ENCODE measurements at regions of chr3 and their contacts with region 1.

Region 1: DNA sequence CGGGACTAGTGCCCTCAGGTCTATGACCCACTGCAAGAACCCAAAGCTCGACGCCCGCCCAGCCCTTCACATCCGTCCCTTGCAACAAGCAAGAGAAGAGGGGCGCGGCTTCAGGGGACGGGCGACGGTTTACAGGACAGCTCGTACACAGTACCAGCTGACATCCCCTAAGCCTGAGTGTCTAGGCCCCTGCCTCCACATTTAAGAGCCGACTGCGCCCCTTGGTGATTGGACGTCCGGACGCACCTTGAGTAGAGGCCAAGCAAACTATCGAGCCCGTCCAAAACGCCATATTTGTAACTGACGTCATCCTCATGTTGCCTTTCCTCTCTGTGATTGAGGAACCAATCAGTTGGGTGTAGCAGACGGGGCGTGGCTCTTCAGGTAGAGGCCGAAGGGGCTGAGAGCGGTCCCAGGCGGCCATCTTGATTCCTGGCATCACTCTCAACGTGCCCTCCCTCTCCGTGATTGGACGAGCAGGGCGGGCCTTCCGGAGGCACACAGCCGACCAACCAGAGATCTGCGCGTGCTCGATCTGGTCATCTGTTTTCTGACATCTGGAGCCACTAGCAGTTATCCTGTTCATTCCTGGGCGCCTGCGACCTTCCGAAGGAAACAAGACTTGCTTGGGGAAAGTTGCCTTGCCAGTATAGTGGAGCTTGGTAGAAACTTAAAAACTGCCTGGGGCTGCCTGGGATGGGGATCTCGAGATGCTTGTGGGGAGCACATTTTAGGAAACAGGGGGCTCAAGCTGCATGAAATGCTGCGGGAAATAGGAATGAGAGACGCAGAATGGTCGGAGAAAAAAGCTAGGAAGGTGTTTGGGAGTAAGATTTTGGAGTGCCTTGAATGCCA is 4.0 kb upstream of the RPL14 start:
- DNase-seq: peak; percentile 99
- ATAC-seq: peak; percentile 88
- H3K4me3 ChIP-seq: peak overlapping the region; percentile 77
- H3K27ac ChIP-seq: peak overlapping the region; percentile 52
- H3K4me1 ChIP-seq: peaks cover 43% of the 10 kb centered on the region
- H3K27me3 ChIP-seq: no peaks in the 10 kb centered on the region
- CTCF ChIP-seq: no peak; the same call in 1 of the 2 replicates

Region 2: GRCh38 chr3:40309418-40309924 is 143.6 kb before region 1 on chr3 and contains the start of gene EIF1B:
- CTCF ChIA-PET with region 1: no interaction called
- POLR2A ChIA-PET with region 1: no interaction called
- intact Hi-C with region 1: loop called (anchors 2 kb)
- DNase-seq: peak; percentile 98
- ATAC-seq: peak; percentile 92
- H3K4me3 ChIP-seq: peak within 1 kb of the TSS; percentile 93
- H3K27ac ChIP-seq: peak within 1 kb of the TSS; percentile 25; the same call in 1 of the 2 replicates
- H3K4me1 ChIP-seq: peaks cover 14% of the 10 kb centered on the region; the same call in 1 of the 2 replicates
- H3K27me3 ChIP-seq: no peaks in the 10 kb centered on the region
- CTCF ChIP-seq: peak; percentile 87
- total RNA-seq, gene EIF1B: 9.0 and 10.0 TPM in 2 replicates

Region 3: DNA sequence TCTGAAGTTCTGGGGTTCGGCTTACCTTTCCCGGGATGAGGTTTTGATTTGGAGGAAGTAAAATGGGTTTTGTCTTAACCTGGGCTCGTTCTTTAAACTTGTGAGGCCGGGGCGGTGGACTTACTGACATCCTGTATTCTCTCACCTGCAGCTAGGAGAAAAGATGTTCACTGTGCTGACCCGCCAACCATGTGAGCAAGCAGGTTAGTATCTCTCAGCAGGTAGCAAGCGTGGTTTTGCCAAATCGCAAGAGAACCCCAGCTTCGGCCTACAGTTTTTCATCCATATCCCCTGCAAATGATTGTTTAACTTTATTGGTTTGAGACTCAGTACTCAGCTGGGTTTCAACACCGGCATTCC is 65.2 kb before region 1 on chr3:
- CTCF ChIA-PET with region 1: no interaction called
- POLR2A ChIA-PET with region 1: interaction called, 6 read pairs
- intact Hi-C with region 1: loop called (anchors 1 kb)
- DNase-seq: no peak
- ATAC-seq: peak; percentile 11
- H3K4me3 ChIP-seq: peak overlapping the region; percentile 75
- H3K27ac ChIP-seq: peak overlapping the region; percentile 80
- H3K4me1 ChIP-seq: peaks cover 31% of the 10 kb centered on the region
- H3K27me3 ChIP-seq: no peaks in the 10 kb centered on the region
- CTCF ChIP-seq: no peak

Region 4: GRCh38 chr3:40476478-40477470 is 23.7 kb after region 1 on chr3 and contains the start of gene ZNF619:
- CTCF ChIA-PET with region 1: no interaction called
- POLR2A ChIA-PET with region 1: no interaction called
- intact Hi-C with region 1: loop called (anchors 2 kb)
- DNase-seq: peak; percentile 75
- ATAC-seq: peak; percentile 90
- H3K4me3 ChIP-seq: peak within 1 kb of the TSS; percentile 82
- H3K27ac ChIP-seq: no peak within 1 kb of the TSS; the same call in 1 of the 2 replicates
- H3K4me1 ChIP-seq: peaks cover 5% of the 10 kb centered on the region; the same call in 1 of the 2 replicates
- H3K27me3 ChIP-seq: no peaks in the 10 kb centered on the region
- CTCF ChIP-seq: no peak
- total RNA-seq, gene ZNF619: 3.5 and 6.0 TPM in 2 replicates

Region 5: GRCh38 chr3:40505599-40506462 is 52.7 kb after region 1 on chr3 and contains the start of gene ZNF620:
- CTCF ChIA-PET with region 1: interaction called, 3 read pairs
- POLR2A ChIA-PET with region 1: no interaction called
- intact Hi-C with region 1: loop called (anchors 2 kb)
- DNase-seq: peak; percentile 69
- ATAC-seq: peak; percentile 62
- H3K4me3 ChIP-seq: peak within 1 kb of the TSS; percentile 72
- H3K27ac ChIP-seq: peak within 1 kb of the TSS; percentile 63
- H3K4me1 ChIP-seq: peaks cover 24% of the 10 kb centered on the region
- H3K27me3 ChIP-seq: no peaks in the 10 kb centered on the region
- CTCF ChIP-seq: peak; percentile 55
- total RNA-seq, gene ZNF620: 1.8 and 2.5 TPM in 2 replicates

Region 6: DNA sequence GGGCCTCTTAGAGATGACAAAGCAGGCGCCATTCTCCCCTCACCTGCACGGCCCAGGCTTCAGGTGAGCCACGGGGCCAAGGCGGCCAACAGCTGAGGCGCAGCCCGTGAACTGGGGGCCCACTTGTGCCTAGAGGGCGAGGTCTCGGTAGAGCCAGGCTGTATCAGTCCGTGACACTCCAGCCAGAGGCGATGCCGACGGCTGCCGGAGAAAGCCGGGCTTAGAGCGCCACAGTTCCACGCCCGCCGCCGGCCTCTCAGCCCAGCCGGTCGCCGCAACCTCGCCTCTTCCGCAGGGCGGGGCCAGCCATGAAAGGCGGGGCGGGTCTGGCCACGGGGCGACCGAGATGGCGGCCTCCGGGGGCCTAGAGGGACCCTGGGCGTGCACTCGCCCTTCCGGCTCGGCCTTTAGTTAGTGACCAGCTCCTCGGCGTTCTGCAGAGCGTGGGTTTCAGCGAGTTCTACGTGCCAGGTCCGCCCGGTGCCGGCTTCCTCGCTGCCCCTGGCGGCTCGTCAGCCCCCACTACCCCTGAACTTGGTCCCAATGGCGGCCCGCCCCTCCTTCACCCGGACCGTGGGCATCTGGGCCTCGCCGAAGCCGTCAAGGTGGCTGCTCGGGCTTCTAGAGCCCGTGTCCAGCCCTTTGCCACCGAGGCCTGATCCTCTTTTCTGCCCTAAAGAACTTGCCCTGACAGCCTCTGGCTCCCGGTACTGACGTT is 71.6 kb after region 1 on chr3 and contains the start of gene ZNF621:
- CTCF ChIA-PET with region 1: interaction called, 3 read pairs
- POLR2A ChIA-PET with region 1: interaction called, 3 read pairs
- intact Hi-C with region 1: loop called (anchors 1 kb)
- DNase-seq: peak; percentile 89
- ATAC-seq: peak; percentile 98
- H3K4me3 ChIP-seq: peak within 1 kb of the TSS; percentile 91
- H3K27ac ChIP-seq: peak within 1 kb of the TSS; percentile 75
- H3K4me1 ChIP-seq: peaks cover 20% of the 10 kb centered on the region
- H3K27me3 ChIP-seq: no peaks in the 10 kb centered on the region
- CTCF ChIP-seq: 0 out of 2 replicates have a peak, but pooled peaks have one; percentile 15
- total RNA-seq, gene ZNF621: 17.0 and 21.9 TPM in 2 replicates

Region 7: GRCh38 chr3:41961750-41962679 is 1508.9 kb after region 1 on chr3 and contains the start of gene ULK4:
- CTCF ChIA-PET with region 1: no interaction called
- POLR2A ChIA-PET with region 1: no interaction called
- intact Hi-C with region 1: loop called (anchors 5 kb)
- DNase-seq: peak; percentile 99
- ATAC-seq: peak; percentile 90
- H3K4me3 ChIP-seq: peak within 1 kb of the TSS; percentile 87
- H3K27ac ChIP-seq: peak within 1 kb of the TSS; percentile 15
- H3K4me1 ChIP-seq: peaks cover 6% of the 10 kb centered on the region; the same call in 1 of the 2 replicates
- H3K27me3 ChIP-seq: no peaks in the 10 kb centered on the region
- CTCF ChIP-seq: no peak
- total RNA-seq, gene ULK4: 4.8 and 10.0 TPM in 2 replicates